ENCODE measurements at regions of chr14 and their contacts with region 1.

Region 1: DNA sequence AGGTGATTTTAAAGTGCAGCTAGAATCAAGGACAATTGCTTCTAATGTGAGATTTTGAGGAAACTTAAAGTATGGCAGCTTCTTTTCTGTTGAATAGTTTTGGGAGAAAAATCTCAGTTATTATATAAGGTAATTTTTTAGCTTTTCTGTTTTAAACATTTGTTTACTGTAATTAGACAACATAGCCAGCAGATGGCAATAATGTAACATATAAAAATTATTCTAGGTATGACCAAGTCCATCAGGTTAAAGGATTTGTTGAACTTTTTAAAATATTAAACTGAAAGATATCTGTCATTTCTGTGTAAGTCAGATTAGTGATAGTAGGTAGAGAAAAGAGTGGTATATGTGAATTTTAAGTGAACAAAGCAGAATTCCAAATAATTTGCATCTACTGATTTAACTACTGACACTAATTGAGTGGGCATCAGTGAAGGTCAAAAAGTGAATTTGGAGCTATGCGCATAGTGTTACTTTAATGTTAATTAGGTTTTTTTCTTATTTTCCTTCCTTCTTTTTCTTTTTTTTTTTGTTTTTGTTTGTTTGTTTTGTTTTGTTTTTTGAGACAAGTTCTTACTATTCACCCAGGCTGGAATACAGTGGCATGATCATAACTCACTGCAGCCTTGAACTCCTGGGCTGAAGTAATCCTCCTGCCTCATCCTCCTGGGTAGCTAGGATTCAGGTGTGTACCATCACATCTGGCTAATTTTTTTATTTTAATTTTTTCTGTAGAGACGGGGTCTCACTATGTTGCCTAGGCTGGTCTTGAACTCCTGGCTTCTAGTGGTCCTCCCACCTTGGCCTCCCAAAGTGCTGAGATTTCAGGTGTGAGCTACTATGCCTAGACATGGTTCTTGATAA is 18.6 kb downstream of the PRORP start:
- DNase-seq: no peak
- ATAC-seq: no peak
- H3K4me3 ChIP-seq: no peak overlapping the region
- H3K27ac ChIP-seq: no peak overlapping the region
- H3K4me1 ChIP-seq: no peaks in the 10 kb centered on the region
- H3K27me3 ChIP-seq: no peaks in the 10 kb centered on the region
- CTCF ChIP-seq: peak; percentile 34; the same call in 1 of the 2 replicates

Region 2: DNA sequence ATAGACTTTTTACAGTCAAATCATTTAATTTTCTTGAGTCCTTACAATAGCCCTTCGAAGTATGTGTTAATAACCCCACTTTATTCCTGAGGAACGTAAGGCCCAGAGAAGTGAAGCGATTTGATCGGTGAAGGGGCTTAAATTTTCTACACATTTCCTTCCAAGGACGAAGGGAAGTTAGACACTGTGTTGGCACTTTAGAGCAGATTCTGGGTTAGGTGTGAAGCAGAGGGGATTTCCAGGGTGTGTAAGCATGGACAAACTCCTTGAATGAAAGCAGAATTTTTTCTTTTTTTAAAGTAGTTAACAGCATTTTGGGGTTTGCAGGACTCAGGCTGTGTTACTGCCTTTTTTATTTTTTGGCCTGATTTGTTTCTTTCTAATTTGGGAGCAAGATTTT is 20.3 kb after region 1 on chr14:
- CTCF ChIA-PET with region 1: interaction called, 3 read pairs
- POLR2A ChIA-PET with region 1: interaction called, 10 read pairs
- in situ Hi-C with region 1: no loop called
- intact Hi-C with region 1: no loop called
- DNase-seq: no peak
- ATAC-seq: no peak
- H3K4me3 ChIP-seq: no peak overlapping the region
- H3K27ac ChIP-seq: peak overlapping the region; percentile 92
- H3K4me1 ChIP-seq: peaks cover 46% of the 10 kb centered on the region
- H3K27me3 ChIP-seq: no peaks in the 10 kb centered on the region
- CTCF ChIP-seq: no peak

Measured in Panc1 (cell line).